ENCODE measurements at regions of chr11 and their contacts with region 1.

Region 1: GRCh38 chr11:123707606-123708205 is 33.8 kb downstream of the ZNF202 start:
- DNase-seq: peak; percentile 39
- H3K4me3 ChIP-seq: no peak overlapping the region
- H3K27ac ChIP-seq: no peak overlapping the region
- H3K27me3 ChIP-seq: peaks cover 8% of the 10 kb centered on the region
- CTCF ChIP-seq: peak; percentile 82

Region 2: GRCh38 chr11:123560006-123560405 is 147.7 kb before region 1 on chr11:
- CTCF ChIA-PET with region 1: interaction called, 10 read pairs
- POLR2A ChIA-PET with region 1: no interaction called
- DNase-seq: peak; percentile 41
- H3K4me3 ChIP-seq: peak overlapping the region; percentile 52
- H3K27ac ChIP-seq: peak overlapping the region; percentile 39
- H3K27me3 ChIP-seq: peaks cover 3% of the 10 kb centered on the region
- CTCF ChIP-seq: no peak

Region 3: GRCh38 chr11:123616505-123617198 is 91.1 kb before region 1 on chr11:
- CTCF ChIA-PET with region 1: interaction called, 13 read pairs
- POLR2A ChIA-PET with region 1: no interaction called
- DNase-seq: peak; percentile 61
- H3K4me3 ChIP-seq: no peak overlapping the region
- H3K27ac ChIP-seq: no peak overlapping the region
- H3K27me3 ChIP-seq: no peaks in the 10 kb centered on the region
- CTCF ChIP-seq: no peak

Region 4: DNA sequence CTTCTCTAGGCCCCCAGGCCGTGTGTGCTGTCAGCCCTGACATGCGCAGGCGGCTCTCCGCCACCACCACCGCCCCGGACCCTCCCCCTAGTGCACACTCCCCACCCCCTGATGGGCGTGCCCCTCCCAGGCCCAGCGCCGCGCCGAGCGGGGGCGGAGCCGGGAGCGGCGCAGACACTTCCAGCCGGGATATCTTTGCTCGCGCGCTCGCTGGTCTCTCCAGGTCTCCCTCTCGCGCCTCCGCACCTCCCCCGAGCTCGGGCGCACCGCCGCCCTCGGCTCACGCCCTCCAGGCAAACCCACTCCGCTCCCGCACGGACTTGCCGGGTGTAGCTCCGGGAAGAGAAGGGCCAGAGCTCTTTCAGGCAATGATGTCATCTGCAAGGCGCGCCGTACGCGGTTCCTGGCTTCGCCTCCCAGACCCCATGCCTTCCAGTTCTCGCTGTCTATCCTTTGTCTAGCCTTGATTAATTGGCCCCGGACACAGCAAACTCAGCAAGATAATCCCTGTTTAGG is 53.1 kb before region 1 on chr11 and contains the start of gene SCN3B:
- CTCF ChIA-PET with region 1: interaction called, 27 read pairs
- POLR2A ChIA-PET with region 1: no interaction called
- DNase-seq: peak; percentile 21
- H3K4me3 ChIP-seq: peak within 1 kb of the TSS; percentile 66
- H3K27ac ChIP-seq: no peak within 1 kb of the TSS
- H3K27me3 ChIP-seq: peaks cover 8% of the 10 kb centered on the region
- CTCF ChIP-seq: no peak
- polyA plus RNA-seq, gene SCN3B: 0.09 and 0.17 TPM in 2 replicates

Region 5: DNA sequence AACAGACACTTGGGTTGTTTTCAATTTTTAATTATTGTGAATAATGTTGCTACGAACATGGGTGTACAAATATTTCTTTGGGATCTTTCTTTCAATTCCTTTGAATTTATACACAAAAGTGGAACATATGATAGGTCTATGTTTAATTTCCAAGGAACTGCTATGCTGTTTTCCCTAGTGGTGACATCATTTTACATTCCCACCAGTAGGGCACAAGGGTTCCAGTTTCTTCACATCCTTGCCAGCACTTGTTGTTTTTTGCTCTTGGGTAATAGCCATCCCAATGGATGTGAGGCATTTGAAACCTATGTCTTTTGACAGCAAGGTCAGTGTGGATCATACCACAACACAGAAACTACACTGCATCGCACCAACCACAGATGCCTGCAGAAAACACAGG is 11.5 kb before region 1 on chr11:
- CTCF ChIA-PET with region 1: interaction called, 20 read pairs
- POLR2A ChIA-PET with region 1: no interaction called
- DNase-seq: no peak
- H3K4me3 ChIP-seq: no peak overlapping the region
- H3K27ac ChIP-seq: no peak overlapping the region
- H3K27me3 ChIP-seq: no peaks in the 10 kb centered on the region
- CTCF ChIP-seq: no peak

Region 6: GRCh38 chr11:123729602-123730001 is 21.9 kb after region 1 on chr11:
- CTCF ChIA-PET with region 1: interaction called, 15 read pairs
- POLR2A ChIA-PET with region 1: no interaction called
- DNase-seq: no peak
- H3K4me3 ChIP-seq: no peak overlapping the region
- H3K27ac ChIP-seq: no peak overlapping the region
- H3K27me3 ChIP-seq: no peaks in the 10 kb centered on the region
- CTCF ChIP-seq: no peak